HAP-1 (cell line): ENCODE measurements at regions of chr14 and their contacts with region 1.

Region 1: GRCh38 chr14:102917469-102918211 is 4.8 kb upstream of the AMN start:
- DNase-seq: peak; percentile 46 to 86
- H3K4me3 ChIP-seq: no peak overlapping the region
- H3K4me1 ChIP-seq: no peaks in the 10 kb centered on the region
- H3K27me3 ChIP-seq: no peaks in the 10 kb centered on the region

Region 2: DNA sequence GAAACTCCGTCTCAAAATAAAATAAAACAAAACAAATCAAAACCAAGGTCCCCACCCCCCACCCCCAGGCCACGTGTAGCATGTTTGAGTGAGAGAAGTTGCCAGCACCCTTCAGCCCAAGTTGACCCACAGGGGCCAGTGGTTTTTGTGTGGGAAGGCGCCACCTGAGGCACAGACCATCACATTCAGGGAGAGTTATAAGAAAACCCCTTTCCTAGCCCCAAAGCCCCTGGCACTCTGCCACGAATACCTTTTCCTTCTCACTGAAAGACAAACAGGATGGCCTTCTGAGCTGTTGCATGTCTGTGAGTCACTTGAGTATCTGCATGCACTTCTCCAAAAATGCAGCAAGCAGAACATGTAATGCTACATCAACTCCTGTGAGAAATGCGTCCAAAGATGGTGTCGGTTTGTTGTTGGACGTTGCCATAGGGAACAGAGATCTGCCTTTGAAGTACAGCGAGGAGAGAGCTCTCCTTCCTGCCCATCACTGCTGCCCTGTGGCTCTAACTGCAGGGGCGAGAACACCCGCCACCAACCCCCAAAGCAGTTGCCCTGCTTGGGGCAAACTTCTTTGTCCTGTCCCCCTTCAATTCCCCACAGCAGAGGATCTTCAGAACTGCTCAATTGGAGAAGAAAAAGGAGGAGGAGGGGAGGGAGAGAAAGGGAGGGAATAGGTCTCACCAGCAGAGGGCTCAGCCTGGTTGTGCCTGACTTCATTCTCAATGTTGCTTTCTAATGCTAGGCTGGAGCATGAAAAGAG is 143.1 kb before region 1 on chr14:
- in situ Hi-C with region 1: loop called (anchors 10 kb)
- DNase-seq: peak; percentile 74 to 75
- H3K4me3 ChIP-seq: no peak overlapping the region
- H3K4me1 ChIP-seq: peaks cover 4% of the 10 kb centered on the region
- H3K27me3 ChIP-seq: no peaks in the 10 kb centered on the region

Region 3: DNA sequence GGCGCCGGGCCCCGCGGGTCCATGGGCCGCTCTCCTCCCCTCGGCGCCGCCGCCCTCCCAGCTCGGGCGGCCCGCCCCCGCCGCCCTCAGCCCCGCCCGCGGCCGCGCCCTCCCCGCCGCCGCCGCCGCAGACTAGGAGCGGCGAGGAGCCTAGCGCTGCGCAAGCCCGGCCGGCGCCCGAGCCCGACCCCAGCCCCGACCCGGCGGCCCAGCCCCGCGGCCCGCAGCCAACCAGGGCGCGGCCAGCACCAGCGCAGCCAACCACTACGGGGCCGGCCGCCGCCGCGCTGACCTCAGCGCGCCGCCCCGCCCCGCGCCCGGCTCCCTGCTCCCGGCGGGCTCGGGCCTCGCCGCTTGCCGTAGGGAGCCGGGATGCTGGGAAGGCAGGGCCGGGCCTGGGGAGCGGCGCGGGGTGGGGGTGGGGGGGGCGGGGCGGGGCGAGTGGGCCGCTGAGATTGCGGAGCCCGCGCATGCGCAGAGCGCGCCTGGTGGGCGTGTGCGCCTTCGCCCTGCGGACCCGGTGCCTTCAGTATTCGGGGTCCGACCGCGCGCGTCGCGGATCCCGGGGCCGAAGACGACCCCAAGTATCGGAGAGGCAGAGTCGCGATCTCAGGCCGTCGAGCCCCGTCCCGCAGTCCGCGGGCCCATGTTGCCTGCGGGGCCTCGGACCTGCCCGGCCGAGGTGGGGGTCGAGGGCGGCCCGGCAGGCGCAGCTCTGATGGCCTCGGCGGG is 139.9 kb after region 1 on chr14 and contains the start of gene CDC42BPB:
- in situ Hi-C with region 1: no loop called
- DNase-seq: peak; percentile 88 to 90
- H3K4me3 ChIP-seq: peak within 1 kb of the TSS; percentile 70
- H3K4me1 ChIP-seq: peaks cover 18% of the 10 kb centered on the region
- H3K27me3 ChIP-seq: no peaks in the 10 kb centered on the region